IMR-90 (cell line): ENCODE measurements at regions of chr14 and their contacts with region 1.

Region 1: GRCh38 chr14:42715316-42715715 is 1108.6 kb downstream of the LRFN5 start:
- DNase-seq: peak; percentile 50
- ATAC-seq: no peak
- H3K4me3 ChIP-seq: no peak overlapping the region
- H3K27ac ChIP-seq: no peak overlapping the region
- H3K4me1 ChIP-seq: no peaks in the 10 kb centered on the region
- H3K27me3 ChIP-seq: no peaks in the 10 kb centered on the region
- CTCF ChIP-seq: no peak
- POLR2A ChIP-seq: no peak
- RAD21 ChIP-seq: no peak

Region 2: GRCh38 chr14:44287858-44288257 is 1572.5 kb after region 1 on chr14:
- CTCF ChIA-PET with region 1: no interaction called
- POLR2A ChIA-PET with region 1: no interaction called
- dilution Hi-C with region 1: no loop called
- in situ Hi-C with region 1: no loop called
- intact Hi-C with region 1: loop called (anchors 5 kb)
- DNase-seq: no peak
- ATAC-seq: no peak
- H3K4me3 ChIP-seq: no peak overlapping the region
- H3K27ac ChIP-seq: no peak overlapping the region
- H3K4me1 ChIP-seq: no peaks in the 10 kb centered on the region
- H3K27me3 ChIP-seq: no peaks in the 10 kb centered on the region
- CTCF ChIP-seq: no peak
- POLR2A ChIP-seq: no peak
- RAD21 ChIP-seq: no peak